ENCODE measurements at regions of chr17 and their contacts with region 1.

Region 1: GRCh38 chr17:44141717-44142285 is at the start of gene HROB:
- DNase-seq: peak; percentile 86 to 99 (median 97)

Region 2: GRCh38 chr17:44115585-44116415 is 26.0 kb before region 1 on chr17:
- intact Hi-C with region 1: no loop called
- DNase-seq: peak in 5 of 10 donors; percentile 39 to 91 (median 83)

Region 3: DNA sequence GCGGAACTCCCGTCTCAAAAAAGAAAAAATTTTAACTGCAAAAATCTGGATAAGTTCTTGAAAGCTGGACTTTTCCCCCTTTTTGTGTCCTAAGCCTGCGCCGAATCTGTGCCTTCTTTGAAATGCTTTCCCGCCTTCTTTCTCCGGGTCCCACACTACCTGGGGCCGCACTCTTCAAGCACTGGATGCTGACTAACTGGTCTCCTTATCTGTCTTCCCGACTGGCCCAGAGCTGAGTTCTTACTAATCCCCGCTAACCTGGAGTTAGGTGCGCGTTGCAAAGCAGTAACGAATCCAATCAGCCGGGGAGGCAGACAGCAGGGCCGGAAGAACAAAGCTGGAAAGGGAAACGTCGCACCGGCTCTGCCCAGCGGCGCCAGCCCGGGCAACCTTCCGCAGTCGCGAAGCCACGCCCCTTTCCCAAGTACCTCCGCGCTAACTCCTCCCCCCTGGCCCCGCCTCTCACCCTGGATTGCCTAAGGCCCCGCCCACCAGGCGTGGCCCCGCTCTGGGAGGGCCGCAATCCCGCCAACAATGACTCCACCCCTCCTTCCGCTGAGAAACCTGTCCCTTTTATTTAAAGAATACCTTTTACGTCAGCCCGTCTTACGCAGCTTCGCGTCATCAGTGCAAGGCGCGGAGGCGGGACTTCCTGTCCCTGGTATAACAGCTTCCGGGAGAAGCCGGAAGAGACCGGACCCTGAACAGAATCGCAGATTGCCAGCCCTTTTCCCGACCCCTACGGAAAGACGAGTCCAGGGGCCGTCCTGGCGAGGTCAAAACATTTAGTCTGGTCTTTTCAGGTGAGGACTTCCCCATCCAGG is 44.7 kb after region 1 on chr17 and contains the start of gene TMUB2:
- intact Hi-C with region 1: loop called (anchors 2 kb)
- DNase-seq: peak; percentile 97 to 100 (median 99)

Region 4: DNA sequence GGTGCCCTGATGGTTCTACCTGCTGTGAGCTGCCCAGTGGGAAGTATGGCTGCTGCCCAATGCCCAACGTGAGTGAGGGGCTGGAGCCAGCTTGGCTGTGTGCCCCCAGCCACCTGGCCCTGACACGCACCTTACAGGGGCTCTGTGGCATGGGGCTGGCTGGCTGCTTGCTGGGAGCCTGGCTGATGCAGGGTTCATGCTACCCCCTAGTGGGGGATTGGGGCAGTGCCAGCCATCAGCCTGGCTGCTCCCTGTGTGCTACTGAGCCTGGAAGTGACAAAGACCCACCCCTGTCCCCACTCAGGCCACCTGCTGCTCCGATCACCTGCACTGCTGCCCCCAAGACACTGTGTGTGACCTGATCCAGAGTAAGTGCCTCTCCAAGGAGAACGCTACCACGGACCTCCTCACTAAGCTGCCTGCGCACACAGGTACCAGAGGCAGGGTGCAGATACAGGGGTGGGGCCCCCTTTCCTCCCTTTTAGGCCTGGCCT is 209.0 kb after region 1 on chr17:
- intact Hi-C with region 1: no loop called
- DNase-seq: peak; percentile 61 to 96 (median 80)

Measured in posterior cingulate gyrus (tissue), 11 donors.